Activated B cell treated with CpG ODN at 0.5 μM for 24 hours (primary cell): ENCODE measurements at regions of chr2 and their contacts with region 1.

Region 1: GRCh38 chr2:227479865-227480475 is 8.0 kb downstream of the AGFG1 start:
- DNase-seq: no peak
- ATAC-seq: peak; percentile 52
- H3K4me3 Mint-ChIP-seq: no peak overlapping the region
- H3K27ac Mint-ChIP-seq: peak overlapping the region; percentile 4
- H3K4me1 Mint-ChIP-seq: peaks cover 70% of the 10 kb centered on the region
- H3K27me3 Mint-ChIP-seq: no peaks in the 10 kb centered on the region
- CTCF ChIP-seq: no peak

Region 2: DNA sequence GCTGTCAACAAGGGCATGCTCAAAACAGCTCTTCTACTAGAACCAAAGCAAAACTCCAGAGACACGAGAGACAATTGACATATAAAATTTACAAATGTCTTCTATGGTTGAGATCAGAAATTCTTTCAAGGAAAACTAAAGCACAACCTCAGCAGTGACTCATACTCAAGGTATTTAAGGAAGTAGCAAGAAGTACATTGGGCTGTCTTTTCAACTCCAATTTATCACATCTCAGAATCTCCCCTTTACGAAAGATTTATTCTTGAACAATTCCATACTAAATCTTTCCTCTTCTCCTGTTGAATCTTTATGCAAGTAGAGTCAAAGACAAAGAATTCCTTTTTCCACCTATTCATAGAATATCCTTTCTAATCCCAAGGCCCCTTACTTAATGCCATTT is 1004.3 kb before region 1 on chr2:
- CTCF ChIA-PET with region 1: no interaction called
- POLR2A ChIA-PET with region 1: no interaction called
- intact Hi-C with region 1: no loop called
- DNase-seq: no peak
- ATAC-seq: no peak
- H3K4me3 Mint-ChIP-seq: no peak overlapping the region
- H3K27ac Mint-ChIP-seq: no peak overlapping the region
- H3K4me1 Mint-ChIP-seq: no peaks in the 10 kb centered on the region
- H3K27me3 Mint-ChIP-seq: peaks cover 3% of the 10 kb centered on the region
- CTCF ChIP-seq: no peak

Region 3: GRCh38 chr2:227025510-227025909 is 454.5 kb before region 1 on chr2:
- CTCF ChIA-PET with region 1: no interaction called
- POLR2A ChIA-PET with region 1: no interaction called
- intact Hi-C with region 1: no loop called
- DNase-seq: no peak
- ATAC-seq: no peak
- H3K4me3 Mint-ChIP-seq: no peak overlapping the region
- H3K27ac Mint-ChIP-seq: no peak overlapping the region
- H3K4me1 Mint-ChIP-seq: no peaks in the 10 kb centered on the region
- H3K27me3 Mint-ChIP-seq: no peaks in the 10 kb centered on the region
- CTCF ChIP-seq: no peak

Region 4: GRCh38 chr2:227423656-227424499 is 56.1 kb before region 1 on chr2:
- CTCF ChIA-PET with region 1: no interaction called
- POLR2A ChIA-PET with region 1: no interaction called
- intact Hi-C with region 1: no loop called
- DNase-seq: no peak
- ATAC-seq: no peak
- H3K4me3 Mint-ChIP-seq: no peak overlapping the region
- H3K27ac Mint-ChIP-seq: no peak overlapping the region
- H3K4me1 Mint-ChIP-seq: no peaks in the 10 kb centered on the region
- H3K27me3 Mint-ChIP-seq: no peaks in the 10 kb centered on the region
- CTCF ChIP-seq: no peak

Region 5: GRCh38 chr2:227436436-227437174 is 43.4 kb before region 1 on chr2:
- CTCF ChIA-PET with region 1: no interaction called
- POLR2A ChIA-PET with region 1: no interaction called
- intact Hi-C with region 1: no loop called
- DNase-seq: no peak
- ATAC-seq: no peak
- H3K4me3 Mint-ChIP-seq: no peak overlapping the region
- H3K27ac Mint-ChIP-seq: no peak overlapping the region
- H3K4me1 Mint-ChIP-seq: no peaks in the 10 kb centered on the region
- H3K27me3 Mint-ChIP-seq: no peaks in the 10 kb centered on the region
- CTCF ChIP-seq: no peak

Region 6: GRCh38 chr2:227499627-227500617 is 20.0 kb after region 1 on chr2:
- CTCF ChIA-PET with region 1: no interaction called
- POLR2A ChIA-PET with region 1: no interaction called
- intact Hi-C with region 1: loop called (anchors 2 kb)
- DNase-seq: no peak
- ATAC-seq: no peak
- H3K4me3 Mint-ChIP-seq: no peak overlapping the region
- H3K27ac Mint-ChIP-seq: no peak overlapping the region
- H3K4me1 Mint-ChIP-seq: peaks cover 39% of the 10 kb centered on the region
- H3K27me3 Mint-ChIP-seq: no peaks in the 10 kb centered on the region
- CTCF ChIP-seq: no peak

Region 7: GRCh38 chr2:227655454-227655853 is 175.5 kb after region 1 on chr2:
- CTCF ChIA-PET with region 1: interaction called, 7 read pairs
- POLR2A ChIA-PET with region 1: no interaction called
- intact Hi-C with region 1: loop called (anchors 2 kb)
- DNase-seq: no peak
- ATAC-seq: no peak
- H3K4me3 Mint-ChIP-seq: no peak overlapping the region
- H3K27ac Mint-ChIP-seq: no peak overlapping the region
- H3K4me1 Mint-ChIP-seq: no peaks in the 10 kb centered on the region
- H3K27me3 Mint-ChIP-seq: peaks cover 7% of the 10 kb centered on the region
- CTCF ChIP-seq: no peak